ENCODE measurements at regions of chr7 and their contacts with region 1.

Region 1: GRCh38 chr7:45881759-45882464 is 6.4 kb upstream of the IGFBP1 start:
- DNase-seq: no peak
- ATAC-seq: no peak
- H3K4me3 ChIP-seq: no peak overlapping the region
- H3K4me3 Mint-ChIP-seq: peak overlapping the region in 1 of 10 donors; percentile 1
- H3K27ac ChIP-seq: no peak overlapping the region
- H3K27ac Mint-ChIP-seq: no peak overlapping the region
- H3K4me1 ChIP-seq: no peaks in the 10 kb centered on the region
- H3K4me1 Mint-ChIP-seq: no peaks in the 10 kb centered on the region
- H3K27me3 ChIP-seq: no peaks in the 10 kb centered on the region
- H3K27me3 Mint-ChIP-seq: peaks cover 7 to 41% (median 24%) of the 10 kb centered on the region in 5 donors

Region 2: DNA sequence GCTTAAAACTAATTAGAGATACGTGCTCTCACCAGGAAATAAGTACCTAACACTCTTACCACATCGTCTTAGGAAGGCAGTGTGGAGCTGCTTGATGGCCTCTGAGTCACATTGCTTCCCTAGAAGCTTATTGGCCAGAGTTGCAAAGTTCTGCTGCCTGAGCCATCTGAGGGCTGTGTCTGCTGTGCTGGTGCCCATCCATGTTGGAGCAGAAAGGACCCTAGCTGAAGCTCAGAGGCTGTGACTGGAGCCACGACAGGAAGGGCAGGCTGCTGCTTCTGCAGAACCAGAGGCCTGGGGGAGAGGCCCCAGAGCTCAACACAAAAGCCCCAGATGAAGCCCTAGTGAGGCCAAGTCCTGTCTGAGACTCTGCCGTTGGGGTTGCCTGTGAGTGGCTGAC is 104.0 kb after region 1 on chr7:
- CTCF ChIA-PET with region 1: no interaction called
- POLR2A ChIA-PET with region 1: no interaction called
- intact Hi-C with region 1: no loop called
- DNase-seq: no peak
- ATAC-seq: no peak
- H3K4me3 ChIP-seq: no peak overlapping the region
- H3K4me3 Mint-ChIP-seq: no peak overlapping the region
- H3K27ac ChIP-seq: no peak overlapping the region
- H3K27ac Mint-ChIP-seq: no peak overlapping the region
- H3K4me1 ChIP-seq: no peaks in the 10 kb centered on the region
- H3K4me1 Mint-ChIP-seq: no peaks in the 10 kb centered on the region
- H3K27me3 ChIP-seq: no peaks in the 10 kb centered on the region
- H3K27me3 Mint-ChIP-seq: peaks cover 0 to 3% (median 0%) of the 10 kb centered on the region in 5 donors

Region 3: DNA sequence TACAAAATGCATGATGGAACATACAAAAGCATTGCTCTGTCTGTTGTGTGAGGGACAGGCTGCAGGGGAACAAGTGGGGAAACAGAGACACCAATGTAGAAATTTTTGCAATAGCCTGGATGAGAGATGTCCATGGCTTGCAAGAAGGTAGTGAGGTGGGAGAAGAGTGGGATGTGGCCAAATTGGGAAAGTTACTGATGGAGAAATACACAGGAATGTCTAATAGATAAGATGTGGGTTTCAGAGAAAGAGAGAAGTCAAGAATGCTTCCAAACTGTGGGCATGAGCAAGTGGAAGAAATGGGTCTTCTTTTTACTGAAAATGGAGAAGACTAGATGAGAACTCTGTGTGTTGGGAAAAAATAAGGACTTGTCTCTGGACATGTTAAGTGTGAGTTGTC is 1107.3 kb after region 1 on chr7:
- CTCF ChIA-PET with region 1: no interaction called
- POLR2A ChIA-PET with region 1: no interaction called
- intact Hi-C with region 1: loop called in 1 of 2 experiments (anchors 5 kb)
- DNase-seq: no peak
- ATAC-seq: no peak
- H3K4me3 ChIP-seq: no peak overlapping the region
- H3K4me3 Mint-ChIP-seq: no peak overlapping the region
- H3K27ac ChIP-seq: no peak overlapping the region
- H3K27ac Mint-ChIP-seq: no peak overlapping the region
- H3K4me1 ChIP-seq: no peaks in the 10 kb centered on the region
- H3K4me1 Mint-ChIP-seq: no peaks in the 10 kb centered on the region
- H3K27me3 ChIP-seq: no peaks in the 10 kb centered on the region
- H3K27me3 Mint-ChIP-seq: no peaks in the 10 kb centered on the region

Measured in naive thymus-derived CD4-positive, alpha-beta T cell (primary cell).